Prostate gland (tissue), 2 donors: ENCODE measurements at regions of chr1 and their contacts with region 1.

Region 1: GRCh38 chr1:31789259-31790065 is 25.3 kb upstream of the ADGRB2 start:
- DNase-seq: peak; percentile 95
- H3K4me3 ChIP-seq: peak overlapping the region; percentile 40 to 56
- H3K27ac ChIP-seq: peak overlapping the region; percentile 84 to 85
- H3K4me1 ChIP-seq: no peaks in the 10 kb centered on the region
- H3K27me3 ChIP-seq: no peaks in the 10 kb centered on the region
- CTCF ChIP-seq: peak; percentile 92 to 99 (median 96)
- POLR2A ChIP-seq: no peak

Region 2: GRCh38 chr1:31564134-31564989 is 225.1 kb before region 1 on chr1:
- intact Hi-C with region 1: loop called (anchors 5 kb)
- DNase-seq: peak; percentile 48
- H3K4me3 ChIP-seq: no peak overlapping the region
- H3K27ac ChIP-seq: no peak overlapping the region
- H3K4me1 ChIP-seq: no peaks in the 10 kb centered on the region
- H3K27me3 ChIP-seq: no peaks in the 10 kb centered on the region
- CTCF ChIP-seq: peak; percentile 69 to 90 (median 88)
- POLR2A ChIP-seq: no peak

Region 3: DNA sequence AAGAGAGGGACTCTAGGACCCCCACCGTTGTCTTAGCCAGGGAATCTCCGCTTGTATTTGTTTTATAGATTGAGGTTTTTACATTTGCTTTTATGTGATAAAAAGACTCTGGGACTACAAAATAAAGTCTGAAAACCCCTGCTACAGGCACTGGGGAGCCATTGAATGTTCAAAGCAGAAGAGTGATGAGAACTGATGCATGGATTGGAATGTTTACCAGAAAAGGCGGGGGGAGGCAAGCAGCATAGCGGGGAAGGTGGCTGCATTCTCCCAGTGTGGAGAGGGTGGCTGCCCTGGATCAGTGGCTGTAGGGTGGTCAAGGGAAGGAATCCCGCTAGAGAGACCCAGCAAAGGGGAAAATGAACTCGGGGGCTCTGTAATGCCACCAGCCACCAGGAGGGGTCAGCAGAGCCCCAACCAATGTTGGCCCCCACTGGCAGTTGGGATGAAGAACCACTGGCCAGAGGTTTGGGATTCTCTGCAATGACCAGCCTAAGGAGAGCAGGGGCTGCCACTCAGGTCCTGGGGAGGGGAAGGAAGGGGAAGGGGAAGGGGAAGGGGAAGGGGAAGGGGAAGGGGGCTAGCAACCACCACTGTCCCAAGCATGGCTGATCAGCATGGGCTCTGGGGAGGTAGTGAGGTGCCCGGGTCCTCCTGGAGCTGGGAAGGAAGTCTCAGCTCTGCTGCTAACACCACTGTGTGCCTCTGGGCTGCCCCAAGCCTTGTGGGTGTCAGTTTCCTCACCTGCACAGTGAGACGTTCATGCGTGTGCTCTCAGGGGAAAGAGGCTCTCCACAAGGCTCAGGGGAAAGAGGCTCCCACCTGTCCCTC is 125.6 kb before region 1 on chr1:
- intact Hi-C with region 1: loop called (anchors 5 kb)
- DNase-seq: peak; percentile 33
- H3K4me3 ChIP-seq: no peak overlapping the region
- H3K27ac ChIP-seq: no peak overlapping the region
- H3K4me1 ChIP-seq: no peaks in the 10 kb centered on the region
- H3K27me3 ChIP-seq: no peaks in the 10 kb centered on the region
- CTCF ChIP-seq: peak; percentile 82 to 96 (median 92)
- POLR2A ChIP-seq: no peak

Region 4: GRCh38 chr1:31762726-31763670 is 26.5 kb before region 1 on chr1:
- intact Hi-C with region 1: loop called (anchors 2 kb)
- DNase-seq: peak; percentile 68
- H3K4me3 ChIP-seq: peak overlapping the region; percentile 37 to 48
- H3K27ac ChIP-seq: no peak overlapping the region
- H3K4me1 ChIP-seq: peaks cover 4% of the 10 kb centered on the region
- H3K27me3 ChIP-seq: no peaks in the 10 kb centered on the region
- CTCF ChIP-seq: peak; percentile 48 to 89 (median 70)
- POLR2A ChIP-seq: no peak

Region 5: GRCh38 chr1:31959521-31960340 is 170.3 kb after region 1 on chr1:
- intact Hi-C with region 1: loop called (anchors 10 kb)
- DNase-seq: no peak
- H3K4me3 ChIP-seq: no peak overlapping the region
- H3K27ac ChIP-seq: no peak overlapping the region
- H3K4me1 ChIP-seq: no peaks in the 10 kb centered on the region
- H3K27me3 ChIP-seq: no peaks in the 10 kb centered on the region
- CTCF ChIP-seq: no peak
- POLR2A ChIP-seq: no peak